Lower leg skin (tissue), 4 donors: ENCODE measurements at regions of chr6 and their contacts with region 1.

Region 1: GRCh38 chr6:138817822-138818308 is 22.0 kb downstream of the ECT2L start:
- DNase-seq: peak in 1 of 2 donors; percentile 85
- H3K4me3 ChIP-seq: no peak overlapping the region
- CTCF ChIP-seq: no peak
- POLR2A ChIP-seq: no peak

Region 2: DNA sequence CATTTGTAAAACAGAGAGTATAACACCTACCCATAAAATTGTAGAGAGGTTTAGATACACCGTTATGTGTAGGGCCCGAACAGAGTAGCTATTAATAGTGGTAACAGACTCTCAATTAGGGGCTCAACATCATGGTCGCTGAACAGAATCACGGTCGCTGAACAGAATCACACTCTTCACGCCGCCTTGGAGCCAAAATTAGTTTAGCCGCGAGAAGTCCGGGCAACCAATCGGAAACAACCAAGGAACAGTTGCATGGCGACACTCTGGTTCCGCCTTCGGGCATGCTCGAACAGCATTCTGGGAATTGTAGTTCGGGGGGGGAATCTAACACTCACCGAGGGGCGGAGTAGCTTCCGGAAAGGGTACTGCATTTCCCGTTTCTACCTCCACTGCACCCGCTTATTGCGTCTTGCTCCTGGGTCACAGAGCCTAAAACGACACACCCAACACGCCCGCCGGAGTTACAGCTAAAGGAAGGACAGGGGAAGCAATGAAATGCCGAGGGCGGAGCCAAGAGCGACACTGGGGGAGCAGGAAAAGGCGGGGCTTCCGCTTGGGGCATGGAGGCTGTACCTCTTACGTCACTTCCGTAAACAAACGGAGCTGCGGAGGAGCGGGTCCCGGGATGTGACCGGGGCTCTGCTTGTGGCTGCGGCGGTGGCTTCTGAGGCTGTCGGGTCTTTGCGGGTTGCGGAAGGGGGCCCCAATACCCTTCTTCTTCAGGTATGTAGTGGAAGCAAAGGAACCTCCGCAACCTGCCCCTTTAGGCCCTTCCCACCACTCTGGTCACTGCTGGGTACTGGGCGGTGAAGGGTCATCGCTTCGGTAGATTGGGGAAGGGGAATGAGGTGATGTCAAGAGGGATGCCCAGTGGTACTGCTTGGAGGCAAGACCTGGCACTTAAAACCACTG is 44.4 kb before region 1 on chr6 and contains the start of gene CCDC28A:
- intact Hi-C with region 1: no loop called
- DNase-seq: peak; percentile 97 to 99
- H3K4me3 ChIP-seq: peak within 1 kb of the TSS; percentile 88
- CTCF ChIP-seq: no peak
- POLR2A ChIP-seq: no peak
- total RNA-seq, gene CCDC28A: 16.5 to 23.4 (median 20.6) TPM

Region 3: GRCh38 chr6:138844192-138844591 is 26.3 kb after region 1 on chr6:
- intact Hi-C with region 1: no loop called
- DNase-seq: peak in 1 of 2 donors; percentile 46
- H3K4me3 ChIP-seq: no peak overlapping the region
- CTCF ChIP-seq: no peak
- POLR2A ChIP-seq: no peak

Region 4: DNA sequence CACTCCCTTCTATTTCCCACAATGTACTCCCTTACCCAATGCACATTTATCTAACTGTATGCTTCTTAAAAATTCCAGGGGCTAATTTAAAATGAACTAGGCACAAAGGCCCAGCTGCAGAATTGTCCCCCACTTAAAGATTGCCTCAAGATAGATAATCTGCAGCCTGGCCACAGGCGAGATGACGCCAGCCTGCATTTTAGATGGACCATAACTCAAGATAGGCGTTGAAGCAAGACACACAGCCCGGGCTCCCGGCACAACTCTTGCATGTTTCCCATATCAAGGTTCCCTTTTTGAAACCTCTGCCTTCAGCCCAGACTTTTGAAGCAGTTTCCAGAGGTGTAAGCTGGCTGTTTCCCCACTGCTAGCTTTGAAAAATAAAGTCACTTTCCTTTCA is 173.3 kb after region 1 on chr6:
- intact Hi-C with region 1: loop called (anchors 2 kb)
- DNase-seq: no peak
- H3K4me3 ChIP-seq: no peak overlapping the region
- CTCF ChIP-seq: no peak
- POLR2A ChIP-seq: no peak

Region 5: GRCh38 chr6:139050770-139051313 is 233.0 kb after region 1 on chr6:
- intact Hi-C with region 1: no loop called
- DNase-seq: no peak
- H3K4me3 ChIP-seq: no peak overlapping the region
- CTCF ChIP-seq: no peak
- POLR2A ChIP-seq: no peak

Region 6: GRCh38 chr6:139355172-139355571 is 537.3 kb after region 1 on chr6:
- intact Hi-C with region 1: loop called (anchors 10 kb)
- DNase-seq: no peak
- H3K4me3 ChIP-seq: no peak overlapping the region
- CTCF ChIP-seq: no peak
- POLR2A ChIP-seq: no peak